CD8-positive, alpha-beta T cell (primary cell): ENCODE measurements at regions of chr1 and their contacts with region 1.

Region 1: GRCh38 chr1:16155532-16156410 is at the start of gene EPHA2:
- DNase-seq: peak in 2 of 9 experiments; percentile 28 to 33
- ATAC-seq: no peak
- H3K4me3 ChIP-seq: peak within 1 kb of the TSS; percentile 32 to 40
- H3K4me3 Mint-ChIP-seq: peak within 1 kb of the TSS; percentile 73
- H3K27ac ChIP-seq: no peak within 1 kb of the TSS
- H3K27ac Mint-ChIP-seq: no peak within 1 kb of the TSS
- H3K4me1 ChIP-seq: peaks cover 57% of the 10 kb centered on the region
- H3K4me1 Mint-ChIP-seq: peaks cover 43% of the 10 kb centered on the region
- H3K27me3 ChIP-seq: peaks cover 9 to 34% of the 10 kb centered on the region in 2 experiments
- H3K27me3 Mint-ChIP-seq: peaks cover 13% of the 10 kb centered on the region
- CTCF ChIP-seq: no peak
- total RNA-seq, gene EPHA2: not detected

Region 2: DNA sequence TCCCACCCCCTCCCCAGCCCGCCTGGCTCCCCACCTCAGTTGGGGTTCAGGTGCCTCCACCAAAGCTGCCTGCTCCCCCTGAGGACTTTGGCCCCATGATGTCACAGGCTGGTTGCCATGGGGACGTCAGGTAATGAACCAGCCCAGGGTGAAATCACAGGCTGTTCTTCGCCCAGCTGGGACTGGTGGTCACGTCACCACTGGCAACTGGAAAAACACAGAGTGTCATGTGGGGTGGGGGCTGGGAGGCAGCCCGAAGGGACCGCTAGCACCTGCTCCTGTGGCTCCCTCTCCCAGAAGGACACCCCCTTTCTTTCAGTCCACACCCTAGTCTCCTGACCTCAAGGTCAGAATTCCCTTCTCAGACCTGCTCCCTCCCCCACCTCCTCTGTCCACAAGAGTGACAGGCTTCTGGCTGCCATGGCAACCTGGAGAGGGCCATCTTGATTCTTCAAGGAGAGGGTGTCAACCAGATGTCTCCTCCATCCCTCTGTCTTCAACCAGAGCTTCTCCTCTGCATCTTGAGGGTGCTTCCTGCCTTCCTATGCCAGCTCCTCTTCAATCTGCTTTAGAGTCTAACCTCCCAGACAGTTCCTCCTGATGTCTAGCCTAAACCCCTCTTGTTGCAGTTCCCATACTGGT is 88.5 kb before region 1 on chr1:
- CTCF ChIA-PET with region 1: no interaction called
- POLR2A ChIA-PET with region 1: no interaction called
- intact Hi-C with region 1: no loop called
- DNase-seq: no peak
- ATAC-seq: no peak
- H3K4me3 ChIP-seq: no peak overlapping the region
- H3K4me3 Mint-ChIP-seq: no peak overlapping the region
- H3K27ac ChIP-seq: no peak overlapping the region
- H3K27ac Mint-ChIP-seq: no peak overlapping the region
- H3K4me1 ChIP-seq: peaks cover 6% of the 10 kb centered on the region
- H3K4me1 Mint-ChIP-seq: peaks cover 14% of the 10 kb centered on the region
- H3K27me3 ChIP-seq: peaks cover 2% of the 10 kb centered on the region in 2 experiments
- H3K27me3 Mint-ChIP-seq: peaks cover 7% of the 10 kb centered on the region
- CTCF ChIP-seq: no peak

Region 3: DNA sequence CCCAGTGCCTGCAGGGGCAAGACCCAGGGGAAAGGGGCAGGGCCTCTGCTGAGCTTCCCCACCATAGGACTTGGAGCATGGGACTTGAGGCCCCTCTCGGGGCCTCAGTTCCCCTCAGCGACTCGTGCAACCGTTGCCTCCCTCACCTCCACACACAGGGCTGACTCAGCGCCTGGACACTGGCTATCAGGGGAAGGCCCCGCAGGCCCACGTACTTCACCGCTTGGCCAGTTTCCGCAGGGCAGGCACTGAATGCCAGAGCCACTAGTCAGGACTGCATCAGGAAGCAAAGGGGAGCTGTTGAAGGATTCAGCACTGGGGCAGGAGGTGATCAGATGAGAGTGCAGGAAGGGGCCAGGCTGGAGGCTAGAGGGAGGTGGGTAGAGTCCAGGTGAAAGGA is 66.8 kb before region 1 on chr1:
- CTCF ChIA-PET with region 1: no interaction called
- POLR2A ChIA-PET with region 1: no interaction called
- intact Hi-C with region 1: no loop called
- DNase-seq: no peak
- ATAC-seq: no peak
- H3K4me3 ChIP-seq: no peak overlapping the region
- H3K4me3 Mint-ChIP-seq: no peak overlapping the region
- H3K27ac ChIP-seq: no peak overlapping the region
- H3K27ac Mint-ChIP-seq: no peak overlapping the region
- H3K4me1 ChIP-seq: no peaks in the 10 kb centered on the region
- H3K4me1 Mint-ChIP-seq: no peaks in the 10 kb centered on the region
- H3K27me3 ChIP-seq: no peaks in the 10 kb centered on the region
- H3K27me3 Mint-ChIP-seq: no peaks in the 10 kb centered on the region
- CTCF ChIP-seq: no peak

Region 4: DNA sequence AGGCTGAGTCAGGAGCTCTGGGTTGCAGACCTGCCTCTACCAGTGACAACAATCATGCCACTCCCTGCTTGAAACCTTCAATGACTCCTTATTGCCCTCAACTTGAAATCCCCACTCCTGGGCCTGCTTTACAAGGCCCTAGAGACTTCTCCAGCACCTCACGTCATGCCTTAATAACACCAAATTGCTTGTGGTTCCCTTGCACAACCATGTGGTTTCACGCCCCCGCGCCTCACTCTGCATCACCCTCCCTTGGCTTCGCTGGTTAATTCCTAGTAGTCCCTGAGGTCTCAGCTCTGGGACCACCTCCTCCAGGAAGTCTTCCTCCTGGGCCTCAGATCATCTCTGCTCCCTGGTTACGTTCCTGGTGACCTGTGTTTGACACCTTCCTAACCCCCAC is 32.9 kb before region 1 on chr1:
- CTCF ChIA-PET with region 1: no interaction called
- POLR2A ChIA-PET with region 1: no interaction called
- intact Hi-C with region 1: loop called in 1 of 2 experiments (anchors 1 kb)
- DNase-seq: peak in 7 of 9 experiments; percentile 5 to 88 (median 55)
- ATAC-seq: peak; percentile 82
- H3K4me3 ChIP-seq: no peak overlapping the region
- H3K4me3 Mint-ChIP-seq: peak overlapping the region; percentile 31
- H3K27ac ChIP-seq: no peak overlapping the region
- H3K27ac Mint-ChIP-seq: peak overlapping the region; percentile 6
- H3K4me1 ChIP-seq: peaks cover 16% of the 10 kb centered on the region
- H3K4me1 Mint-ChIP-seq: peaks cover 14% of the 10 kb centered on the region
- H3K27me3 ChIP-seq: no peaks in the 10 kb centered on the region
- H3K27me3 Mint-ChIP-seq: no peaks in the 10 kb centered on the region
- CTCF ChIP-seq: no peak

Region 5: DNA sequence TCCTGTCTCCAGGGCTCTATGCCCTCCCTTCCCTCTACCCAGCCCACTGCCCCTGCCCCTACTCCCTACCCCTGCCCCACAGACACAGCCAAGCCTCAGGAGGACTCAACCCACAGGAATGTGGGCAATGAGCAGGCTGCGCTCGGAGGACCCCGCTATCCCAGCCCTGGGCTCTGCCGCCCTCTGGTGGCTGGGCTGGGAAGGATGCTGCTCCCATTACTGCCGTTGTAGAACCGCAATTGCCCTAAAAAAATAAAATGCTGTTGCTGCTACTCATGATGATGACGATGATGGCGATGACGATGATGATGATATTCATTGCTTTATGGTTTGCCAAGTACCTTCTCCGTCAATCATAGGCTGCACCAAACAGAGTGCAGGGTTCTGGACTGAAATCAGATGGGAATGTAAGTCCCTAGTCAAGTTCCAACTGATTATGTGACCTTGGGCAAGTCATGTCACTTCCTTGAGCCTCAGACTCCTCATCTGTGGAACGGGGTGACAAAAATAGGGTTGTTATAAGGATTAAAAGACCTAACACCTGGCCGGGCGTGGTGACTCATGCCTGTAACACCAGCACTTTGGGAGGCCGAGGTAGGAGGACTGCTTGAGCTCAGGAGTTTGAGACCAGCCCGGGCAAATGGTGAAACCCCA is 32.1 kb after region 1 on chr1:
- CTCF ChIA-PET with region 1: interaction called, 3 read pairs
- POLR2A ChIA-PET with region 1: no interaction called
- intact Hi-C with region 1: loop called in 1 of 2 experiments (anchors 2 kb)
- DNase-seq: peak; percentile 55 to 89 (median 76)
- ATAC-seq: peak; percentile 97
- H3K4me3 ChIP-seq: no peak overlapping the region
- H3K4me3 Mint-ChIP-seq: no peak overlapping the region
- H3K27ac ChIP-seq: no peak overlapping the region
- H3K27ac Mint-ChIP-seq: no peak overlapping the region
- H3K4me1 ChIP-seq: peaks cover 5% of the 10 kb centered on the region
- H3K4me1 Mint-ChIP-seq: peaks cover 4% of the 10 kb centered on the region
- H3K27me3 ChIP-seq: peaks cover 0 to 2% of the 10 kb centered on the region in 2 experiments
- H3K27me3 Mint-ChIP-seq: peaks cover 7% of the 10 kb centered on the region
- CTCF ChIP-seq: peak; percentile 97